Activated naive CD4-positive, alpha-beta T cell treated with anti-CD3 and anti-CD28 coated beads, Interleukin-2, amount 10 ng/mL, durations not matched to agents 7 days and 5 days (primary cell): ENCODE measurements at regions of chr16 and their contacts with region 1.

Region 1: DNA sequence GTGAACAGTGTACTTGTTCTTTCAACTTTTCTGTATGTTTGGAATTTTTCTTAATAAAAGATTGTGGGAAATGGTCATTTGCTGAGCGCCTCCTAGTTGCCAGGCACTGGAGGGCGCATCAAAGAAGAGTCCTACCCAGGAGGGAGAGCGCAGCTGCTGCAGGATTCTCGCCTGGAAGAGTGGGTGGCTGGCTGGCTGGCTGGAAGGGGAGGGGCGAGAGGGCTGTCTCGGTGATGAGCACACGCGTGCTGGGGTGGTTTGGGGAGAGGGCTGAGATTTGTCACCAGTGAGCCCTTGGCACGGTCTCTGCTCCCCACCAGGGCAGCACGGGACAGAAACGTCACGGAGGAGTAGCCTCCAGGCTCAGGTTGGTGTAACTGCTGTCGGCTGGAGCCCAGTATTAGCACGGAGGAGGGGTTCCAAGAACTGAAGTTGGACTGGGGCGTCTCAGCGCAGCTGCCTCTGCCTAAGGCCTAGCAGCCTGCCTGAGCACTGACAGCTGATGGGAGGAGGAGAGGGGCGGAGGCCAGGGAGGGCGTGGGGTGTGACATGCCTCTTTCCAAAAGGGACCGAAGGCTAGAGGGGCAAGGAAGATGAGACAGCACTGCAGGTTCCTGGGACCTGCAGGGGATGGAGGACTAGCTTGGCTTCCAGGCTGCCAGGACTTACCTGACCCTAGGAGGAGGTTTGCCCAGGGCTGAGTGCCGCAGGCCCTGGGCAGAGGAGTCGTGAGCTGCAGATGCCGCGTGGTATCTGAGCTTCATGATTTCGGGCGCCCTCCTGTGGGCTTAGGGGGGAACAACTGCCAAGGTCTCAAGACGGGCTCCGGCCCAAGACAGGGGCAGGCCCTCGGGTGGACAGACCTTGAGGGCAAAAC is 5.7 kb downstream of the LDHD start:
- DNase-seq: peak; percentile 88
- H3K4me3 Mint-ChIP-seq: no peak overlapping the region
- H3K27ac Mint-ChIP-seq: peak overlapping the region; percentile 52
- H3K4me1 Mint-ChIP-seq: peaks cover 57% of the 10 kb centered on the region
- H3K27me3 Mint-ChIP-seq: peaks cover 17% of the 10 kb centered on the region

Region 2: DNA sequence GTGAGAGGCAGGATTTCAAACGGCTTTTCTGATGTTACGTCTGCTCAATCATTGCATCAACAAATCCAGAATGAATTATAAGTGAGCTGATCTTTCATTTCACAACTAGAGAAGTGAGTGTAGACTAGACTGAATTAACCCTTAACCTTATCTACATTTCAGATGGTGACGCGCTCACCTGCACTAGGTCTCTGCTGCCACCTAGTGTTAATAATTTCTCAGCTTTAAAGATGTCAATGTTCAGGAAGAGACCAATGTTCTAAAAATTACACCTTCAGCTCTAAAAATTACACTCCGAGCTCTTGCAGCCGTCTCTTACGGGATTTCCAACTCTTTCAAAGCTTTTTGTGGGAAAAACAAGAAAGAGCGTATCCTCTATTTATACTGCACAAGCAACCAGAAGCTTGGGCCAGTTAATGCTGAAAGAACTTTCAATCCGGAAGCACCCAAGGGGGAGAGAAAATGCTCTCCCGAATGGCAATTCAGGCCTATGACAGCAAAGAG is 248.1 kb before region 1 on chr16:
- CTCF ChIA-PET with region 1: interaction called, 23 read pairs
- DNase-seq: no peak
- H3K4me3 Mint-ChIP-seq: no peak overlapping the region
- H3K27ac Mint-ChIP-seq: no peak overlapping the region
- H3K4me1 Mint-ChIP-seq: peaks cover 18% of the 10 kb centered on the region
- H3K27me3 Mint-ChIP-seq: peaks cover 9% of the 10 kb centered on the region

Region 3: GRCh38 chr16:74998481-74999218 is 112.2 kb before region 1 on chr16 and contains the start of gene ZNRF1:
- CTCF ChIA-PET with region 1: interaction called, 135 read pairs
- DNase-seq: peak; percentile 85
- H3K4me3 Mint-ChIP-seq: peak within 1 kb of the TSS; percentile 83
- H3K27ac Mint-ChIP-seq: peak within 1 kb of the TSS; percentile 82
- H3K4me1 Mint-ChIP-seq: peaks cover 20% of the 10 kb centered on the region
- H3K27me3 Mint-ChIP-seq: peaks cover 31% of the 10 kb centered on the region

Region 4: DNA sequence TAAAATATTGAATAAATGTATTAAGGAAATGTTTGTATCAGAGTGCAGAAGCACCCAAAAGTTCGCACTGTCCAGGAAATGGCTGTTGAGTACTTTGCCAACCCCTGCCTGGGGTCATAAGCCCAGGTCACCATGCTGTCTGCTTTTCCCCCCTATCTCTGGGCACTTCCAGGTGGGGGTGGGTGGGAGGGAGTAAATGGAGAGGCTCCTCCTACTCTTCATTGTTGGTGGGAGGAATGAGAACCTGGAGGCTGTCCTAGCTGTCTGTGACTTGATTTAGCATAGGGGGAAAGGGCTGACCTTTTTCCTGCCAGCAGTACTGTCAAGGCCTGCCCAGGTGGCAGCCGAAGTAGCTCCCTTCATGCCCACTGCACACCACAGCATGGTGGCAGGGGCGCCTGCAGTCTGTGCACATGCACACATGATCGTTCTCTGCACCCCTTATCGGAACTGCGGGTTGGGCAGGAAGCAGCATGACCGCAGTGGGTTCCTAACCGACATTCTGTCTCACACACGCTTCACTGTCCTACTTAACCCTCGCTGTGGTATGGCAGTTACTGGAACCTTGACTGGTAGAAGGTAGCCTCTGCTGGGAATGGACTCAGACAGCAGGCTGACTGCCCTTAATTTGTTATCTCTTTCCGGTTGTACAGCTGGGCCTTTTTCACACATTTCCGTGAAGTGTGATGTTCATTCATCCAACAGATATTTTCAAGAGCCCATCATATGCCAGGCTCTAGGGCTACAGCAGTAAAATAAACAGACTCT is 35.8 kb before region 1 on chr16:
- CTCF ChIA-PET with region 1: interaction called, 11 read pairs
- DNase-seq: peak; percentile 88
- H3K4me3 Mint-ChIP-seq: peak overlapping the region; percentile 39
- H3K27ac Mint-ChIP-seq: peak overlapping the region; percentile 89
- H3K4me1 Mint-ChIP-seq: peaks cover 63% of the 10 kb centered on the region
- H3K27me3 Mint-ChIP-seq: no peaks in the 10 kb centered on the region

Region 5: DNA sequence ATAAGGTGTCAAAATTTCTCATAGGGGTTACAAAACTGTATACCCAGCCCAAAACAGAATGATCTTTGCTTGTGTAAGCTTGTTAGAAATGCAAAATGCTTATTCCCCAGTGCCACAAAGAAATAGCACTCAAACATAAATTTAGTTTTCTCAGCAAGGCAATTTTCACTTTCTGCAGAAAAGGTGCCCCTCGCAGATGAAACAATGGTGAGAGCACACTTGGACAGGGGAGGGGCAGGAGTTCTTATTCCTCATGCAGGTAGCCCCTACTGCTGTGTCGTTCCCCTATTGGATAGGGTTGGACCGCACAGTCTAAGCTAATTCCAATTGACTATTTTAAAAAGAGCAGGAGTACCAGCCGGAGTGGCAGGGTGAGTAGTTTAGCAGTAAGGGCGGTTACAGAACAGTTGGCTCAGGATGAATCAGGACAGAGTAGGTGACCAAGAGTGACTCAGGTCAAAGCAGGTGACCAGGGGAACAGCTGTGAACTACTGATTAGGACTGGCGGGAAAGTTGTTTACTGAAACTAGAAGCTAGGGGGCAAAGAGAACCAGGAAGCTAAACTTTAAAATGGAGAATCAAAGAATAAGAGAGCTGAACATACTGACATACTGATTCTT is 11.2 kb after region 1 on chr16:
- CTCF ChIA-PET with region 1: interaction called, 11 read pairs
- DNase-seq: no peak
- H3K4me3 Mint-ChIP-seq: no peak overlapping the region
- H3K27ac Mint-ChIP-seq: no peak overlapping the region
- H3K4me1 Mint-ChIP-seq: no peaks in the 10 kb centered on the region
- H3K27me3 Mint-ChIP-seq: peaks cover under 1% of the 10 kb centered on the region

Region 6: GRCh38 chr16:75160386-75160785 is 49.5 kb after region 1 on chr16:
- CTCF ChIA-PET with region 1: no interaction called
- DNase-seq: no peak
- H3K4me3 Mint-ChIP-seq: no peak overlapping the region
- H3K27ac Mint-ChIP-seq: no peak overlapping the region
- H3K4me1 Mint-ChIP-seq: no peaks in the 10 kb centered on the region
- H3K27me3 Mint-ChIP-seq: no peaks in the 10 kb centered on the region